ENCODE measurements at regions of chr12 and their contacts with region 1.

Region 1: GRCh38 chr12:102769319-102769916 is 147.6 kb downstream of the PAH start:
- DNase-seq: peak; percentile 61 to 71
- ATAC-seq: peak; percentile 94 to 97; a peak in 5 of 6 replicates
- H3K4me3 ChIP-seq: no peak overlapping the region
- H3K27ac ChIP-seq: no peak overlapping the region
- H3K4me1 ChIP-seq: no peaks in the 10 kb centered on the region
- CTCF ChIP-seq: peak; percentile 70
- EP300 ChIP-seq: no peak
- POLR2A ChIP-seq: no peak
- RAD21 ChIP-seq: peak; percentile 80 to 88

Region 2: GRCh38 chr12:102745971-102746600 is 23.3 kb before region 1 on chr12:
- CTCF ChIA-PET with region 1: interaction called, 10 read pairs
- POLR2A ChIA-PET with region 1: no interaction called
- DNase-seq: no peak
- ATAC-seq: no peak
- H3K4me3 ChIP-seq: no peak overlapping the region
- H3K27ac ChIP-seq: no peak overlapping the region
- H3K4me1 ChIP-seq: no peaks in the 10 kb centered on the region
- CTCF ChIP-seq: no peak
- EP300 ChIP-seq: no peak
- POLR2A ChIP-seq: no peak
- RAD21 ChIP-seq: no peak

Region 3: GRCh38 chr12:102757154-102757881 is 12.1 kb before region 1 on chr12:
- CTCF ChIA-PET with region 1: interaction called, 10 read pairs
- POLR2A ChIA-PET with region 1: no interaction called
- DNase-seq: no peak
- ATAC-seq: no peak
- H3K4me3 ChIP-seq: no peak overlapping the region
- H3K27ac ChIP-seq: no peak overlapping the region
- H3K4me1 ChIP-seq: no peaks in the 10 kb centered on the region
- CTCF ChIP-seq: no peak
- EP300 ChIP-seq: no peak
- POLR2A ChIP-seq: no peak
- RAD21 ChIP-seq: no peak

Region 4: GRCh38 chr12:102799229-102799628 is 29.8 kb after region 1 on chr12:
- CTCF ChIA-PET with region 1: no interaction called
- POLR2A ChIA-PET with region 1: no interaction called
- DNase-seq: no peak
- ATAC-seq: no peak
- H3K4me3 ChIP-seq: no peak overlapping the region
- H3K27ac ChIP-seq: no peak overlapping the region
- H3K4me1 ChIP-seq: no peaks in the 10 kb centered on the region
- CTCF ChIP-seq: no peak
- EP300 ChIP-seq: no peak
- POLR2A ChIP-seq: no peak
- RAD21 ChIP-seq: no peak

Region 5: GRCh38 chr12:102921240-102921639 is 151.8 kb after region 1 on chr12:
- CTCF ChIA-PET with region 1: no interaction called
- POLR2A ChIA-PET with region 1: no interaction called
- DNase-seq: no peak
- ATAC-seq: no peak
- H3K4me3 ChIP-seq: no peak overlapping the region
- H3K27ac ChIP-seq: no peak overlapping the region
- H3K4me1 ChIP-seq: 0 out of 3 replicates have a peak, but pooled peaks cover 5% of the 10 kb centered on the region
- CTCF ChIP-seq: no peak
- EP300 ChIP-seq: no peak
- POLR2A ChIP-seq: no peak
- RAD21 ChIP-seq: no peak

Measured in A549 (cell line).